ENCODE measurements at regions of chr12 and their contacts with region 1.

Region 1: GRCh38 chr12:56029666-56030293 is 8.9 kb downstream of the IKZF4 start:
- DNase-seq: peak; percentile 76
- H3K4me3 ChIP-seq: peak overlapping the region in 1 of 3 experiments; percentile 38
- H3K27ac ChIP-seq: peak overlapping the region; percentile 14
- H3K4me1 ChIP-seq: peaks cover 17% of the 10 kb centered on the region
- H3K27me3 ChIP-seq: no peaks in the 10 kb centered on the region
- CTCF ChIP-seq: peak; percentile 82 to 89
- POLR2A ChIP-seq: no peak

Region 2: GRCh38 chr12:55931780-55932550 is 97.8 kb before region 1 on chr12:
- CTCF ChIA-PET with region 1: interaction called, 7 read pairs
- POLR2A ChIA-PET with region 1: no interaction called
- dilution Hi-C with region 1: no loop called
- intact Hi-C with region 1: loop called (anchors 2 kb)
- DNase-seq: peak; percentile 50
- H3K4me3 ChIP-seq: peak overlapping the region; percentile 53 to 93 (median 70)
- H3K27ac ChIP-seq: peak overlapping the region; percentile 42
- H3K4me1 ChIP-seq: peaks cover 33% of the 10 kb centered on the region
- H3K27me3 ChIP-seq: no peaks in the 10 kb centered on the region
- CTCF ChIP-seq: no peak
- POLR2A ChIP-seq: peak; percentile 64

Region 3: GRCh38 chr12:55973598-55974307 is 56.0 kb before region 1 on chr12 and contains the start of gene RAB5B:
- CTCF ChIA-PET with region 1: interaction called, 12 read pairs
- POLR2A ChIA-PET with region 1: no interaction called
- dilution Hi-C with region 1: no loop called
- intact Hi-C with region 1: no loop called
- DNase-seq: peak; percentile 100
- H3K4me3 ChIP-seq: peak within 1 kb of the TSS; percentile 87 to 93 (median 92)
- H3K27ac ChIP-seq: peak within 1 kb of the TSS; percentile 81
- H3K4me1 ChIP-seq: peaks cover 27% of the 10 kb centered on the region
- H3K27me3 ChIP-seq: no peaks in the 10 kb centered on the region
- CTCF ChIP-seq: no peak
- POLR2A ChIP-seq: peak; percentile 74
- total RNA-seq, gene RAB5B: 97.4 and 103 TPM in 2 replicates

Region 4: DNA sequence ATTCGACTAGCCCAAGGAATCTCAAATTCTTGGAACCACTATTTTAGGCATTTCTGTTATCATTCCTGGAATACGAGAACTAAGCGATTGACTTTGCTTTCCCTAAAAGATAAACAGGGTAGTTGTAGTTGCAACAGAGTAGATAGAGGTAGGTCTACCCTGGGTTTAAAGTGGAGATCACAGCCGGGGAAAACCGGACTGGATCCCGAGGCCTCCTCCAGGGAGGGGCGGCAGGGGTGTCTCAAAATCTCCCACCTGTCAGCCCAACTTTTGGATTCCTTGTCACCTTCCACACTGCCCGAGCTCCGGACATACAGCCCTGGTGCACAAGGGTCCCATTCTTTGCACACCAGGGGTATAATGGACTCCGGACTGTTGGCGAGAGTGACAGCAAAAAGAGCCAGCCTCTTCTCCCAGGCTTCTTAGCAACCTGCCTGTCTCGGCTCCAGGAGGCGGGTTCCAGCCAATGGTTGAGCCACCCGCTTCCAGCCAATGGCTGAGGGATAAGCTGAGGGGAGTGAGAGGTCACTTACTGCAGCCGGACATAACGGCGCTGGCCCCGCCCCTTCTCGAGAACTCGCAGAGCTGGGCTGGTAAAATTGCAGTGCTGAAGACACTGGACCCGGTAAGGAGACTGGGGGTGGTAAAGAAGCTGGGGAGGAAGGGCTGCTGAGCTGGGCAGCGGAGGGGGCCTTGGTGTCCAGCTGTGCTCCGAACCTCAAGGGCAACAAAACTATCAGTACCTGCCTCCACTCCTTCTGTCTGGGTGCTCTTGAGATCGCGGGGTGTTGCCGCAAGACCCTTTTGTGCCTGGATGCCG is 32.9 kb before region 1 on chr12 and contains the start of gene SUOX:
- CTCF ChIA-PET with region 1: interaction called, 295 read pairs
- POLR2A ChIA-PET with region 1: interaction called, 9 read pairs
- dilution Hi-C with region 1: no loop called
- intact Hi-C with region 1: loop called (anchors 1 kb)
- DNase-seq: peak; percentile 98
- H3K4me3 ChIP-seq: peak within 1 kb of the TSS; percentile 17 to 73 (median 40)
- H3K27ac ChIP-seq: no peak within 1 kb of the TSS
- H3K4me1 ChIP-seq: peaks cover 10% of the 10 kb centered on the region
- H3K27me3 ChIP-seq: no peaks in the 10 kb centered on the region
- CTCF ChIP-seq: no peak
- POLR2A ChIP-seq: peak; percentile 85
- total RNA-seq, gene SUOX: 24.3 and 24.8 TPM in 2 replicates

Region 5: GRCh38 chr12:56014206-56014605 is 15.6 kb before region 1 on chr12:
- CTCF ChIA-PET with region 1: interaction called, 48 read pairs
- POLR2A ChIA-PET with region 1: no interaction called
- dilution Hi-C with region 1: no loop called
- intact Hi-C with region 1: no loop called
- DNase-seq: peak; percentile 19
- H3K4me3 ChIP-seq: no peak overlapping the region
- H3K27ac ChIP-seq: no peak overlapping the region
- H3K4me1 ChIP-seq: no peaks in the 10 kb centered on the region
- H3K27me3 ChIP-seq: no peaks in the 10 kb centered on the region
- CTCF ChIP-seq: no peak
- POLR2A ChIP-seq: no peak

Region 6: GRCh38 chr12:56723889-56724700 is 694.3 kb after region 1 on chr12:
- CTCF ChIA-PET with region 1: no interaction called
- POLR2A ChIA-PET with region 1: no interaction called
- dilution Hi-C with region 1: no loop called
- intact Hi-C with region 1: no loop called
- DNase-seq: peak; percentile 41
- H3K4me3 ChIP-seq: peak overlapping the region; percentile 85 to 90 (median 86)
- H3K27ac ChIP-seq: peak overlapping the region; percentile 61
- H3K4me1 ChIP-seq: peaks cover 33% of the 10 kb centered on the region
- H3K27me3 ChIP-seq: no peaks in the 10 kb centered on the region
- CTCF ChIP-seq: no peak
- POLR2A ChIP-seq: no peak

Measured in endothelial cell of umbilical vein (primary cell).